ENCODE measurements at regions of chr2 and their contacts with region 1.

Region 1: DNA sequence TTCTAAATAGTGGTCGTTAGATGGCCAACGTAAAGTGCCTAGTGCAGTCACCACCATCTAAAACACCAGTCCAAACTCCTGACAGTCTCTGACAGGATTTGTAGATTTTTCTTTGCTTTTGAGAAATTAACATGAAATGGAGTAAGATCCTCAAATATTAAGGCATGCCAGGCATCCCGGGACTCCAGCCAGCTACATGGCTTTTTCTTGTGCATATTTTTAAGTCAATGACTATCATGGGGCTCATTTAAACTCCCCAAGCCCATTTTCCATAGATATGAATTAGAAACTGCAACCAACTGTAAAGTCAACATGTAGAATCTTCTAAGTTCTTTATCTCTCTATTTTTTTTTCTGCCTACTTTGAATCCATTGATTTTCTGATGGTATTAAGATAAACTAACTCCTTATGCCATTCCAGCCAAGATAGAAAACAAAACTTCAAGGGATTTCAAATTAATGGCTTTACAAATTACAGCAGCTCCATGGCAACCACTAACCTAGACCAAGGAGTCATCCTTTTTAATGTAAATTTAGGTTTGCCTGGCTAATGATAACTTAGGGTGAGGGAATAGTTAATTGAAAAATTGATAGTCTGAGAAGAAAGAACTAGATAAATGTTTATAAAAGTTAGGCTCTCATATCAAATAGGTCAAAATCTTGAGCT is 764.1 kb upstream of the NXPH2 start:
- DNase-seq: no peak
- H3K4me3 ChIP-seq: no peak overlapping the region
- H3K27ac ChIP-seq: no peak overlapping the region
- H3K4me1 ChIP-seq: no peaks in the 10 kb centered on the region
- H3K27me3 ChIP-seq: no peaks in the 10 kb centered on the region
- CTCF ChIP-seq: no peak
- POLR2A ChIP-seq: no peak

Region 2: DNA sequence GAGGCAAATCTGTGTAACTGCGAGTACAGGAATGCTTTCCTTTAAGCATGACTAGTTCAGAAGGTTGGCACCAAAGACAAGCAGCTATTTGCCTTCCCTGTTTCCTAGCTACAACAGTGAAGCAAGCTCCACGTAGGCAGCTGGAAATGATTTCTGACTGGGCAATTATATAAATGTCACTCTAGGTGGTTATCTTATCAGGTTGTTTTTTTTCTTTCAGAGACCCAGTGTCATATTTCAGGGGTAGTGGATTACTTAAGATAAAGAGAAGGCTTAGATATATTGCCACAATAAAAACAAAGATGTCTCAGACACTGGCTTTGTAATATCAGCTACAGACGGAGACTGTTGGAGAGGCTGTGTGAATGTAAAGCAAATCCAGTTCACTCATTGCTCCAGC is 15.2 kb before region 1 on chr2:
- intact Hi-C with region 1: no loop called
- DNase-seq: no peak
- H3K4me3 ChIP-seq: no peak overlapping the region
- H3K27ac ChIP-seq: no peak overlapping the region
- H3K4me1 ChIP-seq: no peaks in the 10 kb centered on the region
- H3K27me3 ChIP-seq: no peaks in the 10 kb centered on the region
- CTCF ChIP-seq: no peak
- POLR2A ChIP-seq: no peak

Region 3: GRCh38 chr2:141440039-141440635 is 1895.8 kb after region 1 on chr2:
- intact Hi-C with region 1: loop called (anchors 10 kb)
- DNase-seq: no peak
- H3K4me3 ChIP-seq: no peak overlapping the region
- H3K27ac ChIP-seq: no peak overlapping the region
- H3K4me1 ChIP-seq: no peaks in the 10 kb centered on the region
- H3K27me3 ChIP-seq: no peaks in the 10 kb centered on the region
- CTCF ChIP-seq: no peak
- POLR2A ChIP-seq: no peak

Measured in vagina (tissue), 2 donors.